ENCODE measurements at regions of chr20 and their contacts with region 1.

Region 1: DNA sequence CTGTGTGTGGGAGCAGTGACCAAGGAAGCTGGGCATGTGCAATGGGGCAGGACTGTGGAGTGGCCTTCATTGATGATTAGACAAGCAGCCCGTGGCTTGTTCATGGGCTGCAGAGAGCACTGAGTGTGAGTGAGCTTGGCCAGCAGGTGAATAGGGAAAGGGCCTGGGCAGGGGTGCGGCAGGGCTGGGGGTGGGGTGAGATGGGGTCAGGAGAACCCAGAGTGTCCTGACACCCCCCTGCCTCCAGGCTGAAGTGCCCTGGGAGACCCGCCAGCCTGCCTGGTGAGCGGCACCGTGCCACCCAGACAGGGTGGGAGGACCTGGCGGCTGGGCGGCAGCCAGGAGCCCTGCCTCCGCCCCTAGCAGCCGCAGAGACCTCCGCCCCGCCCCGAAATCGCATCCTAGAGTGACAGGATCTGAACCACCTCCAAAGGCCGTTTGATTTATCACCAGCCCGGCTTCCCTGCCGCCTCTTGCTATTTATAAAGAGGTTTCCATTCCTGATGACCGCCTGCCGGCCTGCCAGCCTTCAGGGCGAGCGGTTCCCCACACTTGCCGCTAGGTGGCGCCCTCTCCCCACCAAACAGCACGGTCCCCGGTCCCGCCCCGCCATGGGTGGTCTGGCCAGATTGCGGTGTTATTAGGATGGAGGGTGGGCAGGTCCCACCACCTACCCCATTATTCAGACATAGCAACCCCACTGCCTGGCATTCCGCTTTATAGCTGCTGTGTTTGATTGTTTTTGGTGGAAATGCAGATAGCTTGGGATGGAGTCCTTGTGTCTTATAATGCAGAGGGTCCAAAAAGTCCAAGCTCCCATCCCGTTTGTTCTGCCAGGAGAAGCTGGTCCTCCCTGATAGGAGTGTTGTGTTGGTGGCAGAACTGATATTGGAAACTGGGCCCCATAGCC is 3.5 kb downstream of the MYLK2 start:
- DNase-seq: peak; percentile 80
- ATAC-seq: peak; percentile 84 to 86

Region 2: GRCh38 chr20:32091888-32092346 is 269.2 kb after region 1 on chr20:
- intact Hi-C with region 1: loop called in 1 of 2 experiments (anchors 5 kb)
- DNase-seq: peak; percentile 78
- ATAC-seq: peak; percentile 47 to 80

Measured in left cardiac atrium (tissue), 4 donors.